ENCODE measurements at regions of chr15 and their contacts with region 1.

Region 1: DNA sequence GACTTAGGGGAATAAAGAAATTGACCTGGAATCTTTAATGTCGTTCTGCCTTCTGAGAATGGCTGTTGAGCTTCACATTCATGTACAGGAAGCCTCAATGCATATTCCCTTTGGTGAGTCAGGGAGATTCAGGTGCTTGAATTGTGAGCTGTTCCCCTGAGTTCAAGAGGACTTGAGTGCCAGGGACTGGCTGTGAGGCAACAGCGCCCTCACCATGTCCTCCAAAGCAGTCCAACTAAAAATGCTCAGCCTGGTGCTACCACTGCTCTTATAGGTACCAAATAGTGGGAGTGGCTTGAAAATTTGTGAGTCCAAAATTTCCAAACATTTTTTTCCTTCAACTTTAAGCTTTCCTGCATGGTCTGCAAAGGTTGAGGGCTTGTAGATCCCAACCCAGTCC is 54.1 kb downstream of the LEO1 start:
- DNase-seq: no peak
- H3K4me3 ChIP-seq: no peak overlapping the region
- H3K27ac ChIP-seq: no peak overlapping the region
- H3K4me1 ChIP-seq: no peaks in the 10 kb centered on the region
- H3K27me3 ChIP-seq: no peaks in the 10 kb centered on the region
- CTCF ChIP-seq: no peak
- POLR2A ChIP-seq: no peak

Region 2: DNA sequence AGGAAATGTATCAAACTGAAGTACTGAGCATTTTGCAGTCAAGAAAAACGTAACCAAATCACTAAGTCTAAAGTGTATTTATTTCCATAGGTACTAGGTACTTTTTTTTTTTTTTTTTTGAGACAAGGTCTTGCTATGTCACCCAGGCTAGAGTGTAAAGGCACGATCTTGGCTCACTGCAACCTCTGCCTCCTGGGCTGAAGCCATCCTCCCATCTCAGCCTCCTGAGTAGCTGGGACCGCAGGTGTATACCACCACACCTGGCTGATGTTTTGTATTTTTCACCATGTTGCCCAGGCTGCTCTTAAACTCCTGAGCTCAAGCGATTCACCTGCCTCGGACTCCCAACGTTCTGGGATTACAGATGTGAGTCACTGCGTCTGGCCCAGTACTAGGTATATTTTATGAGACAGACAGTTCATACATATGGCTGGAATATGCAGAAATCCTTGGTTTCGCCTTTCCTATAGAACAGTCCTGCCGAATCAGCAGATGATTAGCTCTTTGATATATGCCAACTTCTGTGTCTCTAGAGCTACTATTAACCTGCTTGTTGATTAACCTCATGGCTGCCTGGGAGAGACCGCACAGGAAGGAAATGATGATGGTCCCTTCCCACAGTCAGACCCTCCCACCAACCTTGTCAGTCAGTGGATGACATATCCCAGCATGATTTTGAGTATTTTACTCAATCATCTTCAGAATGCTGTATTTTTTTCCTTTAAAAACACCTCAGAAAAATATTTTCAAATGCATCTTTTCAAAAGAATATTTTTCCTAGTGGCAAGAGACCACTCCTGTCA is 55.7 kb before region 1 on chr15:
- intact Hi-C with region 1: loop called (anchors 2 kb)
- DNase-seq: no peak
- H3K4me3 ChIP-seq: no peak overlapping the region
- H3K27ac ChIP-seq: no peak overlapping the region
- H3K4me1 ChIP-seq: no peaks in the 10 kb centered on the region
- H3K27me3 ChIP-seq: no peaks in the 10 kb centered on the region
- CTCF ChIP-seq: no peak
- POLR2A ChIP-seq: no peak

Measured in breast epithelium (tissue), 4 donors.